H1 (cell line): ENCODE measurements at regions of chr12 and their contacts with region 1.

Region 1: GRCh38 chr12:112386726-112387125 is 4.5 kb upstream of the HECTD4 start:
- DNase-seq: no peak
- H3K4me3 ChIP-seq: no peak overlapping the region
- H3K27ac ChIP-seq: no peak overlapping the region
- H3K4me1 ChIP-seq: no peaks in the 10 kb centered on the region; a peak in 1 of 7 replicates
- H3K27me3 ChIP-seq: no peaks in the 10 kb centered on the region
- CTCF ChIP-seq: no peak
- EP300 ChIP-seq: no peak
- POLR2A ChIP-seq: no peak
- RAD21 ChIP-seq: no peak

Region 2: GRCh38 chr12:112191840-112192321 is 194.8 kb before region 1 on chr12:
- CTCF ChIA-PET with region 1: interaction called, 22 read pairs
- POLR2A ChIA-PET with region 1: interaction called, 5 read pairs
- DNase-seq: no peak
- H3K4me3 ChIP-seq: no peak overlapping the region
- H3K27ac ChIP-seq: no peak overlapping the region
- H3K4me1 ChIP-seq: no peaks in the 10 kb centered on the region
- H3K27me3 ChIP-seq: no peaks in the 10 kb centered on the region
- CTCF ChIP-seq: no peak
- EP300 ChIP-seq: no peak
- POLR2A ChIP-seq: no peak
- RAD21 ChIP-seq: no peak

Region 3: DNA sequence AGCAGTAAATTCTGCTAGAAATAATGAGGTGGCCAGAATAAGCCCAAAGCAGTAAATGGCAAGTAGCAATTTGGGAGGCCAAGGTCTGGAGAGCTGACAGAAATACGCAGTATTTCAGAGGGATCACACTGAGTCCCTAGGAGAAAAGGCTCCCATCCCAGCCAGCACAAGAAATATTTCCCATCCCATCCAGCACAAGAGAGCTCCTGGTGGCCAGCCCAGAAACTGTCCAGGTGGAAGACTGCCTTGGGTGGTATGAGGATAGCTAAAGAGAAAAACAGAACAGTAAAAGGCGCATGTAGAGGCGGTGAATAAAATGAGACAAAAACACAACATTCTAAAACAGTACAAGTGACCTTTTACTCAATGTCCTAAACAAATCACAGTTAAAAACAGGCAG is 125.2 kb before region 1 on chr12:
- CTCF ChIA-PET with region 1: interaction called, 12 read pairs
- POLR2A ChIA-PET with region 1: no interaction called
- DNase-seq: no peak
- H3K4me3 ChIP-seq: no peak overlapping the region
- H3K27ac ChIP-seq: no peak overlapping the region
- H3K4me1 ChIP-seq: peaks cover 0 to under 1% (median 0%) of the 10 kb centered on the region in 4 experiments; a peak in 1 of 7 replicates
- H3K27me3 ChIP-seq: no peaks in the 10 kb centered on the region
- CTCF ChIP-seq: peak; percentile 49 to 67 (median 50)
- EP300 ChIP-seq: no peak
- POLR2A ChIP-seq: no peak
- RAD21 ChIP-seq: peak; percentile 38 to 54

Region 4: GRCh38 chr12:112370199-112370598 is 16.5 kb before region 1 on chr12:
- CTCF ChIA-PET with region 1: interaction called, 12 read pairs
- POLR2A ChIA-PET with region 1: interaction called, 5 read pairs
- DNase-seq: no peak
- H3K4me3 ChIP-seq: no peak overlapping the region
- H3K27ac ChIP-seq: no peak overlapping the region
- H3K4me1 ChIP-seq: peaks cover 0 to 2% (median 0%) of the 10 kb centered on the region in 4 experiments; a peak in 2 of 7 replicates
- H3K27me3 ChIP-seq: no peaks in the 10 kb centered on the region
- CTCF ChIP-seq: 0 out of 4 replicates have a peak, but pooled peaks of 1 of the 3 experiments have one; percentile 2
- EP300 ChIP-seq: no peak
- POLR2A ChIP-seq: no peak
- RAD21 ChIP-seq: no peak

Region 5: GRCh38 chr12:112401903-112402498 is 15.3 kb after region 1 on chr12:
- CTCF ChIA-PET with region 1: interaction called, 8 read pairs
- POLR2A ChIA-PET with region 1: interaction called, 59 read pairs
- DNase-seq: no peak
- H3K4me3 ChIP-seq: no peak overlapping the region
- H3K27ac ChIP-seq: no peak overlapping the region
- H3K4me1 ChIP-seq: no peaks in the 10 kb centered on the region
- H3K27me3 ChIP-seq: no peaks in the 10 kb centered on the region
- CTCF ChIP-seq: no peak
- EP300 ChIP-seq: no peak
- POLR2A ChIP-seq: no peak; a peak in 1 of 3 replicates
- RAD21 ChIP-seq: no peak

Region 6: DNA sequence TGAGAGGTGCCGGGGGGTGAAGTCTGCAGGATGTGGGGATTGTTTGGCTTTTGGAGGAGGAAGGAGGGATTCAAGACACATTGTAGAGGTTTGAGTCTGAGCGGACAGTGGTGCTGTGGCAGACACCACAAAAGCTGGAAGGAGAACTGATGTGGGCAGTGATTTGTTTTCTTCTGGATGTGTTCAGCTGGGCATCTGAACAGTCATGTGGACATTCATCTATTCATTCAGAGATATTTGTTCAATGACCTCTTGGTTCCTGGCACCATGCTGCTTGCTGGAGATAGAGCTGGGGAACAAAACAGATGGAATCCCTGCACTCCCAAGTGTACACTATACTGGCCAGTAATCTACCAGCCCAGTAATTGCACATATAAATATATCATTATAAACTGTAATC is 96.0 kb after region 1 on chr12:
- CTCF ChIA-PET with region 1: no interaction called
- POLR2A ChIA-PET with region 1: no interaction called
- DNase-seq: no peak
- H3K4me3 ChIP-seq: no peak overlapping the region
- H3K27ac ChIP-seq: no peak overlapping the region
- H3K4me1 ChIP-seq: no peaks in the 10 kb centered on the region
- H3K27me3 ChIP-seq: no peaks in the 10 kb centered on the region
- CTCF ChIP-seq: no peak
- EP300 ChIP-seq: no peak
- POLR2A ChIP-seq: no peak
- RAD21 ChIP-seq: no peak